ENCODE measurements at regions of chr2 and their contacts with region 1.

Region 1: DNA sequence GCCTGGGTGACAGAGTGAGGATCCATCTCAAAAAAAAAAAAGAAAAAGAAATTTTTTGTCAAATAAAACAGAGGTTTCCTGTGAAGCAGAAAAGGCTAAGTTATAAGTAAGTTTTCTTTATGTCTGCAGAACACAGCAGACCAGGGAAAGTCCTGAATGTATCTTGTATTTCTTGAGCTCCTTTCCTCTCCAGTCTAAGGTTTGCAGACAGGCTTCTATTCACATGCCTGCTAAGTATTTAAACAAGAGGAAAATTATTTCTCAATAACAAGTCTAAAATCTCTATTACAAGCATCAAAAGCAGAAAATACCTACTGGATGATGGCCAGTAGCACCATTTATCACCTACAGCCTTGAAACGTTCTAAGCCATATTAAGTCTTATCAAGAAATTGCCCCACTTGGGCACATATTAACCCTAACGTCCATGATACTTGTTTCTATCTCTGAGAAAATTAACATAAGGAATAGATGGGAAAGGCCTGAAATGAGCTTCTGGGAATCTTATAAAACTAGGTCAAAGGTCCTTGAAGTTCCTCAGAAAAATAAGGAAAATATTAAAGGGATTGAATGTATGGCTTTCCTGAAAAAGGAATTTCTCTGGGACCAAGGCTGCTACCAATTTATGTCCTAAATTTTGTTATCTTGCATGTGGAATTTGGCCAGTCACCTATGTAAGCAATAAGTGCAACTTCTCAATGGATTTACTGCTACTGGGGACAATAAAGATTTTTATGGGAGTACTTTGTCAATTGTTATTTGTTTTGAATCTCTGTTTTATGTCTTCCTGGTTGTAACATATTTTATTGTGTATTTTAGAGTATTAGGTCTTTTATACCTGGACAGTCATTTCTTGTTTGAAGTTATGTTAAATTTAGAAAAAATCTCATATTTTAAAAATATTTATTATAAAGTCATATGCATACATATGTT is 3.0 kb upstream of the REG1A start:
- DNase-seq: no peak
- ATAC-seq: no peak
- H3K4me3 ChIP-seq: no peak overlapping the region
- H3K27ac ChIP-seq: no peak overlapping the region
- H3K4me1 ChIP-seq: no peaks in the 10 kb centered on the region
- H3K27me3 ChIP-seq: no peaks in the 10 kb centered on the region
- CTCF ChIP-seq: no peak

Region 2: DNA sequence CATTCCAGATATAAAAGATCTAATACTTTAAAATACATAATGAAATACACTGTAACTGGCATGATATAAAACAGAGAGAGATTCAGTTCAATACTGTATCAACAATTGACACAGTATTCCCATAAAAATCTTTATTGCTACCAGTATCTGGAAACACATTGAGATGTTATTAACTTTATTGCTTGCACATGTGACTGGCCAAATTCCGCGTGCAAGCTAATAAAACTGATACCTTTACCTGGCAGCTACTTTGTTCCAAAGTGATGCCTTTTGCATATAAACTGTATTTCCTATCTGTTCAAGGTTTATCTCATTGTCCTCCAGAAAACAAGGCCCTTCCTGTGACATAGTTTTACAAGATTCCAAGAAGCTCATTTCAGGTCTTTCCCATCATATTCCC is 14.0 kb before region 1 on chr2:
- intact Hi-C with region 1: loop called in 1 of 10 experiments (anchors 1 kb)
- DNase-seq: no peak
- ATAC-seq: no peak
- H3K4me3 ChIP-seq: no peak overlapping the region
- H3K27ac ChIP-seq: no peak overlapping the region
- H3K4me1 ChIP-seq: no peaks in the 10 kb centered on the region
- H3K27me3 ChIP-seq: no peaks in the 10 kb centered on the region
- CTCF ChIP-seq: no peak

Region 3: DNA sequence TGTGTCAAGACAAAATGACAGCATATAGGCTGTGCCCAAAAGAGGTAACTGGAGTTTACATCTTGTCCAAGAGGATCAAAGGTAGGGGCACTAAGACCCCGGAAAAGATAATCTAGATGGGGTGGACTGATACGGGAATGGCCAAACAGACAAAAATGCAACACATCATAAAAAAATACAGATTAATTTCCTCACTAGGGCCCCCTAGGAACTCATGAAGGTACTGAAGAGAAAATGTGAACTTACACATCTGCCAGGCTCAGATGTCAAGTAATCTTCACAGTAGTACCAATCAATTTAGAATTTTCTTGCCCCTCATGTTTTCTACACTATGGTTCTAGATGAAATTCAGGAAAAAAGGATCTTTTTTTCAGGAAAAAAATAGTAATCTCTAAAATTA is 157.9 kb after region 1 on chr2:
- intact Hi-C with region 1: no loop called
- DNase-seq: no peak
- ATAC-seq: no peak
- H3K4me3 ChIP-seq: no peak overlapping the region
- H3K27ac ChIP-seq: no peak overlapping the region
- H3K4me1 ChIP-seq: no peaks in the 10 kb centered on the region
- H3K27me3 ChIP-seq: no peaks in the 10 kb centered on the region
- CTCF ChIP-seq: no peak

Measured in heart right ventricle (tissue), 16 donors.